ENCODE measurements at regions of chr17 and their contacts with region 1.

Region 1: DNA sequence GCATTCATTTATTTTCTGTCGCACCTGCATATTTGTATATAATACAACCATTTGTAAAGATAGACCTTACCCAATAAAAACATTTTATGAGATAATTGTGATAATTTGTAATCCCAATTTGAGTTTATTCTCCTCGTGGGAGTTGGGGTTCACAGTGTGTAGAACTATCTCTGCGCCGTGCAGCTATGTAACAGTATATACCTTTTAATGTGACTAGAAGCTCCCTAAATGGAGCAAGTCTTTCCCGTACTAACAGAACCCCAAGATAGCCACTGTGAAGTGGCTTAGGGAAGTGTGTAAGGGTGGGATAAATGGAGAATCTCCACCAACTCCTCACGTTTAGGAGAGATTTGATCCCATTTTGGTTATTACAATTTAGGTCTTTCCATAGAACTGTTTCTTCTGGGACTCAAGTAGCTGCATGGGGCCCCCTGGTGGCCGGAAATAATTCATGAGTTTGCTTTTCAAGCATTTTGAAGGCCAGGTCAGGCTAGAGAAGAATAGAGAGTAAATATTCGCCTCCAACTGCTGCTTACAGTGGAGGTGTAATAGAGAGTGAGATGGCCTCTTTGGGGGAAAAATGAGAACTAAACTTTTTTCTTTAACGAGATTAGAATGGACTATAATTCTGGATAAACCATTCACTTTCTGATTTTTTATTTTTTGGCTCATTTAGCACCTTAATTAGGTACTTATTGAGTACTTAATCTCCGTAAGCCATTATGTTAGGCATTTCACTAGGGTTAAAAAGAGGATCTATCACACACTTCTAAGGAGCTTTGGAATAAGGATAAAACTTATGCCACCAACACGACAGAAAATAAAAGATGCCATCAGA is 4.5 kb downstream of the TMEM100 start:
- DNase-seq: peak; percentile 39 to 90 (median 69)
- H3K4me3 ChIP-seq: no peak overlapping the region
- H3K27ac ChIP-seq: no peak overlapping the region
- H3K27me3 ChIP-seq: peaks cover 0 to 42% (median 5%) of the 10 kb centered on the region in 45 donors
- CTCF ChIP-seq: peak; percentile 63 to 91 (median 79)

Region 2: DNA sequence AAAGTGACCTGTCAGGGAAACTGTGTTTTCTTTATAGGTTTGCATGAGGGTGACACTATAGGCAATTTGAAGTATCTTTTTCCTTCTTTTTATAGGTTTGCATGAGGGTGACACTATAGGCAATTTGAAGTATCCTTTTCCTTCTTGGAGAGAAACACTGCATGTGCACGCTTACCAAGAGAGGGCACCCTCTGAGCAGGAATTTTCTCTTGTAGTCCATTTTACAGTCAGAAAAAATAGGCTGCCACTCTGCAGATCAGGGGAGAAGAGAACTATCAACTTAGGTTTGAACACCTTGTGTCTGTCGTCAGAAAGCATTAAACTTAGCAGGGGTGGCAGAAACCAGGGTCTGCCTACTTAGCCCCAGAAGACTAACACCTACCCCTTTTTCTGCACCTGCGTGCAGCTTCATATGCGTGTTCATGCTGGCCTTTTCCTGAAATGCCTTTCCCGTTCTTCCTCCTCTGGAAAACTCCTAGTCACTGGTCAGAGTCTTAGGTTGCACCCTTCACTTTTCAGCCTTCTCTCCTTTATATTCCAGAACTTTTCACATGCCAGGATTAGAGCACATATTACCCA is 190.5 kb before region 1 on chr17:
- intact Hi-C with region 1: loop called (anchors 5 kb)
- DNase-seq: peak in 3 of 10 donors; percentile 6 to 30 (median 24)
- H3K4me3 ChIP-seq: no peak overlapping the region
- H3K27ac ChIP-seq: no peak overlapping the region
- H3K27me3 ChIP-seq: peaks cover 0 to 4% (median 0%) of the 10 kb centered on the region in 45 donors
- CTCF ChIP-seq: peak in 54 of 56 donors; percentile 18 to 79 (median 57)

Region 3: DNA sequence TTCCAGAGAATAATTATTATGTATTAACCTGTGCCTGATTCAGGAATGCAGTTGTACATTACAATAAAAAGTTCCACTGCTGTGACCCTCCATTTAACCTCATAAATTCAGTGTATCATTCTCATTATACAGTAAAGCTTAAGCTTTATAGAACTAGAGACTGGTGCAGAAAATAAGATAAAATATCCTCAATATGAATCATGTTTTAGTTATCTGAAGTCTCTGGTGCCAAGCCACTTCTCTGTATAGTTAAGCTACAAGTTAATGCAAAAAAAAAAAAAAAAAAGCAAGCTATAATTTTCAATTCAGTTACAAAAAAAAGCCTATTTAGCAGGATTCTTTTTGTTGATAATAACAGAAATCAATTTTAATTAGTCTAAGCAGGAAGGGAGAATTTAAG is 184.5 kb before region 1 on chr17:
- intact Hi-C with region 1: loop called (anchors 5 kb)
- DNase-seq: no peak
- H3K4me3 ChIP-seq: no peak overlapping the region
- H3K27ac ChIP-seq: no peak overlapping the region
- H3K27me3 ChIP-seq: peaks cover 0 to 5% (median 0%) of the 10 kb centered on the region in 45 donors
- CTCF ChIP-seq: no peak

Region 4: GRCh38 chr17:55546481-55546880 is 171.6 kb before region 1 on chr17:
- intact Hi-C with region 1: no loop called
- DNase-seq: no peak
- H3K4me3 ChIP-seq: no peak overlapping the region
- H3K27ac ChIP-seq: no peak overlapping the region
- H3K27me3 ChIP-seq: peaks cover 0 to 24% (median 0%) of the 10 kb centered on the region in 45 donors
- CTCF ChIP-seq: no peak

Region 5: GRCh38 chr17:55660178-55660886 is 57.8 kb before region 1 on chr17:
- intact Hi-C with region 1: no loop called
- DNase-seq: no peak
- H3K4me3 ChIP-seq: no peak overlapping the region
- H3K27ac ChIP-seq: peak overlapping the region in 32 of 59 donors; percentile 0 to 76 (median 48)
- H3K27me3 ChIP-seq: peaks cover 0 to 8% (median 0%) of the 10 kb centered on the region in 45 donors
- CTCF ChIP-seq: no peak

Region 6: GRCh38 chr17:55673743-55674506 is 44.2 kb before region 1 on chr17:
- intact Hi-C with region 1: no loop called
- DNase-seq: no peak
- H3K4me3 ChIP-seq: no peak overlapping the region
- H3K27ac ChIP-seq: no peak overlapping the region
- H3K27me3 ChIP-seq: peaks cover 0 to 8% (median 0%) of the 10 kb centered on the region in 45 donors
- CTCF ChIP-seq: no peak

Region 7: GRCh38 chr17:55693254-55694216 is 24.6 kb before region 1 on chr17:
- intact Hi-C with region 1: no loop called
- DNase-seq: no peak
- H3K4me3 ChIP-seq: no peak overlapping the region
- H3K27ac ChIP-seq: no peak overlapping the region
- H3K27me3 ChIP-seq: peaks cover 0 to 28% (median 0%) of the 10 kb centered on the region in 45 donors
- CTCF ChIP-seq: no peak

Region 8: DNA sequence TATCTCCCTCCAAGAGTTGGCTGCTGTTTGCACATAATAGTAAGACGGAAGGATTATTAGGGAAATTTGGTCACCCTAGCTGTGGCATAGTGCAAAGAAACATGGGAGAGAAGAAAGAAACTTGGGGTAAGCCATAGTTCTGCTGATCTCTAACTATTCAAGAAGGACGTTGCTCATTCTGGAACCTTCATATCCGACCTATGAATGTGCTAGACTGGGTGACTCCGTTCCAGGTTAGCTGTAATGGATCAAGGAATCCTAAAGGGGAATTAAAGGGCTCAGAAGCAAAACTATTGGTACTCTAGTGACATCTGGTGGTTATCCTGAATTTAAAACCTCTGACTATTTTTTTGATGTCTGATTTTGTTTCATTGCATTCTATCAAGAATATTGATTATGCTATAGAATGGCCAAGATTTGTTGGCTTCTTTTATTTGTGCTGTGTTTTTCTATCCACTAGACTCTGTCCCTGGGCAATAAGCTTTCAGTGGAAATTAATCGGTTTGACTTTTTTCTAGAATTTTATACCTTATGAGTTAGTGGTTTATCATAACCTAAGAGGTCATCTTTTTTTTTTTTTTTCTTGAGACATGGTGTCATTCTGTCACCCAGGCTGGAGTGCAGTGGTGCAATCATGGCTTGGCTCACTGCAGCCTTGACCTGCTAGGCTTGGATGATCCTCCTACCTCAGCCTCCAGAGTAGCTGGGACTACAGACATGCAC is 52.2 kb after region 1 on chr17:
- intact Hi-C with region 1: loop called in 1 of 2 experiments (anchors 5 kb)
- DNase-seq: no peak
- H3K4me3 ChIP-seq: no peak overlapping the region
- H3K27ac ChIP-seq: peak overlapping the region in 4 of 59 donors; percentile 1 to 29 (median 10)
- H3K27me3 ChIP-seq: no peaks in the 10 kb centered on the region
- CTCF ChIP-seq: peak; percentile 55 to 89 (median 74)